ENCODE measurements at regions of chr2 and their contacts with region 1.

Region 1: GRCh38 chr2:45494269-45494977 is 116.6 kb downstream of the SRBD1 start:
- DNase-seq: peak; percentile 32
- H3K4me3 ChIP-seq: no peak overlapping the region
- H3K27ac ChIP-seq: no peak overlapping the region
- H3K4me1 ChIP-seq: no peaks in the 10 kb centered on the region
- H3K27me3 ChIP-seq: no peaks in the 10 kb centered on the region
- CTCF ChIP-seq: peak; percentile 56 to 87 (median 82)
- POLR2A ChIP-seq: no peak

Region 2: GRCh38 chr2:44981136-44982108 is 513.0 kb before region 1 on chr2:
- intact Hi-C with region 1: loop called (anchors 1 kb)
- DNase-seq: peak; percentile 69
- H3K4me3 ChIP-seq: no peak overlapping the region
- H3K27ac ChIP-seq: no peak overlapping the region
- H3K4me1 ChIP-seq: no peaks in the 10 kb centered on the region
- H3K27me3 ChIP-seq: no peaks in the 10 kb centered on the region
- CTCF ChIP-seq: peak; percentile 73 to 94 (median 83)
- POLR2A ChIP-seq: no peak

Region 3: GRCh38 chr2:46365913-46366667 is 871.7 kb after region 1 on chr2:
- intact Hi-C with region 1: no loop called
- DNase-seq: no peak
- H3K4me3 ChIP-seq: no peak overlapping the region
- H3K27ac ChIP-seq: peak overlapping the region in 1 of 2 donors; percentile 69
- H3K4me1 ChIP-seq: peaks cover 4% of the 10 kb centered on the region
- H3K27me3 ChIP-seq: no peaks in the 10 kb centered on the region
- CTCF ChIP-seq: peak in 3 of 4 experiments; percentile 23 to 34 (median 33)
- POLR2A ChIP-seq: no peak

Measured in prostate gland (tissue), 2 donors.